Right cardiac atrium (tissue), 5 donors: ENCODE measurements at regions of chr9 and their contacts with region 1.

Region 1: GRCh38 chr9:37746848-37747753 is 6.5 kb upstream of the TRMT10B start:
- DNase-seq: peak; percentile 39 to 75 (median 68)
- ATAC-seq: peak; percentile 66 to 71
- H3K4me3 ChIP-seq: no peak overlapping the region
- H3K27ac ChIP-seq: no peak overlapping the region
- H3K4me1 ChIP-seq: no peaks in the 10 kb centered on the region
- H3K27me3 ChIP-seq: no peaks in the 10 kb centered on the region

Region 2: DNA sequence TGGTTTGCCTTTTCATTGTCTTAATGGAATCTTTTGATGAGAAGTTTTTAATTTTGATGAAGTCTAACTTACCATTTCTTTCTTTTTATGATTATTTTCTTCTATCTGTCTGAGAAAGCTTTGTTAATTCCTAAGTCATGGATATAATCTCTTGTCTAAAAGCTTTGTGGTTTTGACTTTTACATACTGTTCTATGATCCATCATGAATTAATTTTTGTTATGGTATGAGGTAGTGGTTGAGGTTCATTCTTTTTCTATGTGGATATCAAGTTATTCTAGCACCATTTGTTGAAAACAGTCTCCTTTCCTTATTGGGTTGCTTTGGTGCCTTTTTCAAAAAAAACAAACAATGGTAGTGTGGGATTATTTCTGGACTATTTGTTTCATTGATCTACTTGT is 191.3 kb before region 1 on chr9:
- intact Hi-C with region 1: no loop called
- DNase-seq: no peak
- ATAC-seq: no peak
- H3K4me3 ChIP-seq: no peak overlapping the region
- H3K27ac ChIP-seq: no peak overlapping the region
- H3K4me1 ChIP-seq: no peaks in the 10 kb centered on the region
- H3K27me3 ChIP-seq: no peaks in the 10 kb centered on the region

Region 3: GRCh38 chr9:37984672-37985611 is 237.8 kb after region 1 on chr9:
- intact Hi-C with region 1: no loop called
- DNase-seq: peak; percentile 55 to 76 (median 74)
- ATAC-seq: peak; percentile 83 to 90
- H3K4me3 ChIP-seq: no peak overlapping the region
- H3K27ac ChIP-seq: no peak overlapping the region
- H3K4me1 ChIP-seq: peaks cover 24% of the 10 kb centered on the region
- H3K27me3 ChIP-seq: no peaks in the 10 kb centered on the region

Region 4: GRCh38 chr9:38408719-38409118 is 661.6 kb after region 1 on chr9:
- intact Hi-C with region 1: loop called in 1 of 4 experiments (anchors 10 kb)
- DNase-seq: no peak
- ATAC-seq: no peak
- H3K4me3 ChIP-seq: no peak overlapping the region
- H3K27ac ChIP-seq: no peak overlapping the region
- H3K4me1 ChIP-seq: no peaks in the 10 kb centered on the region
- H3K27me3 ChIP-seq: no peaks in the 10 kb centered on the region